Vagina (tissue), 2 donors: ENCODE measurements at regions of chr4 and their contacts with region 1.

Region 1: DNA sequence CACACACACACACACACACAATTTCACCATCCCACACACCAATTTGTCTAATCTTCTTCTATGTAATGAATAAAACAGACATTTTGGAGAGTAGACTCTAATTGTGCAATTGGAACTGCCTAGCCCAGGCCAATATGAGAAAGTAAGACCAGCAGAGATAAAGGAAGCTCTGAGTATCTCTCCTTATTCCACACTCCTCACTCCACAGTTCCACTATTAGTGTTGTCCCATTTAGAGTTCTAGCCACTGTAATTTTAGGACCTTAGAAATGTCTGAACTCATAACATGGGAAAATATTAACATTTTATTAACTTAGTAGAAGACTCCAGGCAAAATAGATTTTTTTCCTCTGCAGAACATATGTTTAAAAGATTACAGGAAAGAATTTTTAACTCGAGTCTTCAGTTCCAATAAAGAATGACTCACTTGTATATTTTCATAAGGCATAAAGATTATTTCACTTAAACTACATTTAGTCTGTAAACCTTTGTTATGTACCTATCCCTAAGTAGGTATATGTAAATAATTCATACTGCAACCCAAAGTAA is 297.6 kb upstream of the INTU start:
- DNase-seq: no peak
- H3K4me3 ChIP-seq: no peak overlapping the region
- H3K27ac ChIP-seq: no peak overlapping the region
- H3K4me1 ChIP-seq: no peaks in the 10 kb centered on the region
- H3K27me3 ChIP-seq: no peaks in the 10 kb centered on the region
- CTCF ChIP-seq: no peak
- POLR2A ChIP-seq: no peak

Region 2: GRCh38 chr4:127357765-127358164 is 22.6 kb after region 1 on chr4:
- intact Hi-C with region 1: loop called (anchors 1 kb)
- DNase-seq: no peak
- H3K4me3 ChIP-seq: no peak overlapping the region
- H3K27ac ChIP-seq: no peak overlapping the region
- H3K4me1 ChIP-seq: no peaks in the 10 kb centered on the region
- H3K27me3 ChIP-seq: no peaks in the 10 kb centered on the region
- CTCF ChIP-seq: no peak
- POLR2A ChIP-seq: no peak

Region 3: DNA sequence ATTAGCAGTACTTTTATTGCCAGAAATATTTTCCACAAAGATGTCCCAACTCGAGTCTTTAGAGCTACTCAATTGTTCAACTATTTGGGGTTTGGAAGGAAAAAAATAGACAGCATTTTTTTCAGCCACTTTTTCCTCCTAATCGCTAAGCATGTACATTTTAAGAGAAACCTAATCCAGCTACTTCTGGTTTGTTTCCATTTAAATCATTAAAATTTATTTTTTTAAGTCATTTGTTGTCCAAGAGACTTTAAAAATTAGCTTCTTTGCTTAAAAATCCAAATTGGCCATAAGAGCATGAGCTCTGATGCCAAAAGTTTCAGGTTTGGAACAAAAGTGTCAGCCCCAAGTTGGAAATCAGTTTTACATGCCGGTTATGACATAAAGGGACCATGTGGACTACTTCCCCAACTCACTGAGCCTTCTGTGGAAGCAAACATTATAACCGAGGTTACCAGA is 111.3 kb after region 1 on chr4:
- intact Hi-C with region 1: no loop called
- DNase-seq: no peak
- H3K4me3 ChIP-seq: no peak overlapping the region
- H3K27ac ChIP-seq: no peak overlapping the region
- H3K4me1 ChIP-seq: peaks cover 4% of the 10 kb centered on the region
- H3K27me3 ChIP-seq: no peaks in the 10 kb centered on the region
- CTCF ChIP-seq: no peak
- POLR2A ChIP-seq: no peak